ENCODE measurements at regions of chr15 and their contacts with region 1.

Region 1: DNA sequence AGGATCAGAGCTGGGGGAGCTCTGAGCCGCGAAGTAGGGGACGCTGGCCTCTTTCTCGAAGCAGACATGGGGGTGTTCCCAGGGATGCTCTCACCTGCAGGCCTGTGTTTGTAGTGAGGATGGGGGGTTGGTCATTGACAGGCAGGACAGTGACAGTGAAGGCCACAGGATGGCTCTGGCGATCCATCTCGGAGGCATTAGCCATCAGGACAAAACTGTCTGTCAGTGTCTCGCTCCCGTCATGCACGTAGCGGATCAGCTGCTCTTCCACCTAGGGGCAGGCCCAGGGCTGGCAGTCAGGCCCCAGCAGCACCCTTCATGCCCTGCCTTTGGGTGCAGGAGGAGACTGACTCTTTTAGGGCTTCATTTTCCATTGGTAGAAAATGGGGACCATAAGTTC is 28.0 kb downstream of the CSPG4 start:
- DNase-seq: no peak
- CTCF ChIP-seq: no peak

Region 2: DNA sequence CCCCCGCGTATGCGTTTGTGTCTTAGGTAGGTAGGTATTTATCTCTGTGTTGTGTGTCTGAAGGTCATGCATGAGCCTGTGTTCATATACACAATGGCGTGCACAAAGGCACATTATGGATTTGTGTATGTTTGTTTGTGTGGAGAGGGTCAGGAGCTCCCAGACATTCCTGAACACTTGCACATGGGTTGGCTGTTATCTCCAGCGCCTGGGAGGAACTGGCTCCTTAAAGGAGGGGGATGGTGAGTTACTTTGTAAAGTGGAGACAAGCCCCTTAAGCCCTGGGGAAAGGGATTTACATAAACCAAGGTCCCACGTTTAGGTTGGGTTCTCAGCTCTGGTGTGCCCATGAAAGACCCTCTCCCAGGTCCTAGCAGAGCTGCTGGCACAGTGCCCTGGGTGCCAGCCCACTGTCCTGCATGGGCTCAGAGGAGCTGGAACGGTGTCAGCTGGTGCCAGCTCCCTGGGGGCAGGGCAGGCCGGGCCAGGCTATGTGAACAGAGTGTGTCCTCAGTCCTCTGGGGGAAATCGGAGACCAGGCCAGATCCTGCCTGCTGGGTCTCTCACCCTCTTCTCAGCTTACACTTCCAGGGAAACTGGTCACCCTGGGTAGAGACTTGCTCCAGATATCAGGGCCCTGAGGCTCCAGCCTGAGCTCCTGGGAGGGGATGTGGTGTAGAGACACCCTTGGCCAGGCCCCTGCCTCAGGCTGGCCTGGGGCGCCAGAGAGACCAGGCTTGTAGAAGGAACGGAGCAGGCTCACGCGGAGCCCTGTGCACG is 11.8 kb before region 1 on chr15:
- CTCF ChIA-PET with region 1: interaction called, 31 read pairs
- POLR2A ChIA-PET with region 1: no interaction called
- DNase-seq: no peak
- CTCF ChIP-seq: no peak

Region 3: DNA sequence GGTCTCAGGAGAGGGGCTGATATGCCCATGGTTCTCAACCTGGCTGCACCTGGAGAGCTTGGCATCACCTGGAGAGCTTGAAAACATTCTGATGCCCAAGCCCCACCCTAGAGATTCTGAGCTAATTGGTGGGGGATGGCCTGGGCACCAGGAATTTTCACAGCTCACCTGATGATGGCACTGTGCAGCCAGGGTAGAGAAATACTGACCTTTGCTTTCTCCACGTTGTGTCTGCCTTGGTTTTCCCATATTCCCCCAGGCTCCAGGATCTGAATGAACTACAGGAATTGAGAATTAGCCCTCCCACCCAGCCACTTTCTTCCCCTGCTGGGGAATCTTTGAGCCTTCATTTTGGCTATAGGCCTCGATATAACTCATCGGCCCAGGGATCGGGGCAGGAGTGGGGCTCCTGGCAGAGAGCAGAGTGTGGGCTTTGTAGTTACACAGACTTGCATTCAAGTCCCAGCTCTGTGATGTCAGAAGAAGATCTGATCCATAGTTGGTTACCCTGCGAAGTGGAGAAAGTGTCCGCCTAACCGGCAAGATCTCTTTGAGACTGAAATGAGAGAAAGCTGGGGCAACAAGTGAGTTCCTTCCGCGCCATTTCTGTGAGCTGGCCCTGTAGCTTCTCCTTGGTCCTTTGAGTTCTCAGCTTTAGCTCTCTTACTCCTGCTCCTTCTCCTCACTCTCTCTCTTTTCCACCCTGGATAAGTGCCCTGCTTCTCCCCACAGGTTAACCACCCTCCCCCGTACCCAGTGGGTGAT is 125.5 kb after region 1 on chr15:
- CTCF ChIA-PET with region 1: interaction called, 10 read pairs
- POLR2A ChIA-PET with region 1: no interaction called
- DNase-seq: peak; percentile 40
- CTCF ChIP-seq: peak; percentile 61

Measured in GM10248 (cell line).